Ovary (tissue), 10 donors: ENCODE measurements at regions of chr14 and their contacts with region 1.

Region 1: DNA sequence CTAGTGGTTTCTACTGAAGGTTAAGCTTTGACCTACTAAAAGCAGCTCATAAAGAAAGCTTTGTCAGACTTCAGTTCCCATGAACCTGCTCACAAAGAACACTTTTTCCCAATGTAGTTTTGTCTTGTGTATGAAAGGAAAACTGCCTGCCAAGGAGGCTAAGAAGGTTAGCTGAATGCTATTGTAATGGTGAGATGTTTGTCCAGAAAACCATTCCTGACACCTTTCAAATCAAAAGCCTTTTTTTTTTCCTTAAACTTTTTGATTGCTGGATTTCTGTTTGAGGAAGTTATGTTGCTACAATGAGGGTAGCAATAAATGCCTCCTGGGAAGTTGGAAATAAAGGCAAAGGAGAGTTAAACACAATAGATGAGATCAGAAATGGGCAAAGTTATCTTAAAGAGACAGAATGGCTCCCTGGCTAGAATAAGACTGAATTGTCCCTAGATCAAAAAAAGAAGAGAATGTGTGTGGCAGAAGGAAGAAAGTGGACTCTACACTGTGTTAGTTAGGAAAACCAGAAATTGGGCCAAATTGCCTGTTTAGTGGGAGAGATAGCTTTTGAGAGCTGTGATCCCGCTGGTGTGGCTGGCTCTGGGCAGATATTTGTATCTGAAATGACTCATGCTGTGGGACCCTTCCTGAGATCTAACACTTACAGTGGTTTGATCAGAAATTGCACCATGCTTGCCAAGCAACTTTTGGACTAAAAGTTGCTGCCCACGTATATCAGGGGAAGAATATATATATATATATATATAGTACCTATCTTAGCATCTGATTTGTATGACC is 27.5 kb downstream of the TECPR2 start:
- DNase-seq: no peak
- H3K4me3 ChIP-seq: no peak overlapping the region
- H3K27ac ChIP-seq: no peak overlapping the region
- H3K4me1 ChIP-seq: no peaks in the 10 kb centered on the region
- H3K27me3 ChIP-seq: no peaks in the 10 kb centered on the region
- CTCF ChIP-seq: no peak
- EP300 ChIP-seq: no peak
- POLR2A ChIP-seq: no peak

Region 2: GRCh38 chr14:100504372-100505078 is 1885.7 kb before region 1 on chr14:
- intact Hi-C with region 1: loop called in 1 of 4 experiments (anchors 10 kb)
- DNase-seq: no peak
- H3K4me3 ChIP-seq: no peak overlapping the region
- H3K27ac ChIP-seq: no peak overlapping the region
- H3K4me1 ChIP-seq: no peaks in the 10 kb centered on the region
- H3K27me3 ChIP-seq: no peaks in the 10 kb centered on the region
- CTCF ChIP-seq: no peak
- EP300 ChIP-seq: no peak
- POLR2A ChIP-seq: no peak

Region 3: DNA sequence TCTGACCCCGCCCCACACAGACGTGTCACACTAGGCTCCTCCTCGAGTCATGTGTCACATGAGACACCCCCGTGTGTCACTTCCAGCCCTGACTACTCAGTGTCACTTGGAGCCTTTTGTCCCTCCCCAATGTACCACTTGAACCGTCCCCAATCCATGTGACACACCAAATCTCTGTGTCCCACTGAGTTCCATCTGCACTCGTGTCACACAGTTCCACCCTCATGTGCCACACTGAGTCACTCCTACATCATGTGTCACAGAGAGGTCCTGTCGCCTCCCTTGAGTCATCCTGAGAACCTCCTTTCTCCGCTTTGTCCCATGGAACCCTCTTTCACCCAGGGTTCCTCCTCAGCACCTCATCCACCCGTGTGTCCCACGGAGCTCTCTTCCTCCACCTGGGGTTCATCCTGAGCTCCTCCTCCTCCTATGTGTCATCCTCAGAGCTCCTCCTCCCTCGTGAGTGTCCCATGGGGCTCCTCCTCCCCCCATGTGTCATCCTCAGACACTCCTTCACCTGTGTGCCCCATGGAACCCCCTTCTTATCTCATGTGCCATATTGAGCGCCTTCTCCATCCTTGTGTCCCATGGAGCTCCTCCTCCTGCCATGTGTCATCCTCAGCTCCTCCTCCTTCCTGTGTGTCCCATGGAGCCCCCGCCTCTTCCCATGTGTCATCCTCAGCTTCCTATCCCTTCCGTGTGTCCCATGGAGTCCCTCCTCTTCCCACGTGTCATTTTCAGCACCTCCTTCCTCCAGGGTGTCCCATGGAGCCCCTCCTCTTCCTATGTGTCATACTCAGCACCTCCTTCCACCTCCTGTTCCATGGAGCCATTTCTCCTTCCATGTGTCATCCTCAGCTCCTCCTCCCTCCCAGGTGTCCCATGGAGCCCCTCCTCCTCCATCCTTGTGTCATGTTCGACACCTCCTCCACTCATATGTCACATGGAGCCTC is 1518.8 kb before region 1 on chr14:
- intact Hi-C with region 1: loop called in 1 of 4 experiments (anchors 10 kb)
- DNase-seq: peak in 2 of 5 donors; percentile 16 to 32
- H3K4me3 ChIP-seq: no peak overlapping the region
- H3K27ac ChIP-seq: no peak overlapping the region
- H3K4me1 ChIP-seq: no peaks in the 10 kb centered on the region
- H3K27me3 ChIP-seq: no peaks in the 10 kb centered on the region
- CTCF ChIP-seq: no peak
- EP300 ChIP-seq: no peak
- POLR2A ChIP-seq: no peak